ENCODE measurements at regions of chr4 and their contacts with region 1.

Region 1: GRCh38 chr4:3822230-3822947 is 56.2 kb downstream of the ADRA2C start:
- DNase-seq: peak; percentile 15
- ATAC-seq: no peak
- H3K4me3 ChIP-seq: no peak overlapping the region
- H3K27ac ChIP-seq: no peak overlapping the region
- H3K4me1 ChIP-seq: peaks cover 96% of the 10 kb centered on the region
- H3K27me3 ChIP-seq: no peaks in the 10 kb centered on the region
- CTCF ChIP-seq: no peak
- EP300 ChIP-seq: no peak
- POLR2A ChIP-seq: no peak
- RAD21 ChIP-seq: no peak

Region 2: DNA sequence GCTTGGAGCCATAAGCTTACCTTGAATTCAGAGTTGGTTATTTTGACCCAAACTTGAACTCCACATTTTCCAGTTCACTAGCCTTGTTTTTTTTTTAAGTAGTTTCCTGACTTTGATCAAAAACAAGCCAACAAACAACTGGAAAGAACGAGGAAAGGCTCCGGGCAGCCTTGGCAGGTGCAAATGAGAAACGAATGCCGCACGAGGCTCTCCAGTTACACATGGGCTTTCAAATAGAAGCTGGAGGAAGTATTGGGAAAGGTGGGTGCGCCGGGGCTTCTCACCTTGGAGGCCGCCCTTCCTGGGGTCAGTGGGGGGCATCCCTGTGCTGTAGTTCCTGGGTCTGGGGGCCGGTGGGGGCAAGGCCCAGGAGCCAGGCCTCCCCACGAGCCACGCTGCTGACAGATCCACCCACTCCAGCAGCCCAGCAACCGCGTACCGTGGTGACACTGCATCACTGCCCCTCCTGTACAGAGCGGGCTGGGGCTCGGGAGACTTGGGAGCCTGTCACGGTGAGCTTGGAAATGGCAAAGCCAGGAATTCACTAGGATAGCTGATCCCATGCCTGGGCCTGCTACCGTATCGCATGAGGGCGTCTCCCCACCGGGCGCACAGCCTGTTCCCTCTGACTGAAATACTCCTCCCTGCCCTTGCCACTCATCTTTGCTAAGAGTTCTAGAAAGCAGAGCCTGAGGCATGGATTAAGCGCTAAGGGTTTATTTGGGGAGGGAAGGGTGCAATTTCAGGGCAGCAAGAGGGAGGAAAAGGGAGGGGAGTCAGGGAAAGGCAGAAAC is 107.1 kb before region 1 on chr4:
- CTCF ChIA-PET with region 1: no interaction called
- POLR2A ChIA-PET with region 1: no interaction called
- in situ Hi-C with region 1: no loop called
- intact Hi-C with region 1: no loop called
- DNase-seq: no peak
- ATAC-seq: no peak
- H3K4me3 ChIP-seq: no peak overlapping the region
- H3K27ac ChIP-seq: no peak overlapping the region
- H3K4me1 ChIP-seq: peaks cover 6% of the 10 kb centered on the region; the same call in 1 of the 2 replicates
- H3K27me3 ChIP-seq: peaks cover 8 to 69% of the 10 kb centered on the region in 2 experiments; a peak in 4 of 5 replicates
- CTCF ChIP-seq: no peak
- EP300 ChIP-seq: no peak
- POLR2A ChIP-seq: no peak
- RAD21 ChIP-seq: no peak

Region 3: DNA sequence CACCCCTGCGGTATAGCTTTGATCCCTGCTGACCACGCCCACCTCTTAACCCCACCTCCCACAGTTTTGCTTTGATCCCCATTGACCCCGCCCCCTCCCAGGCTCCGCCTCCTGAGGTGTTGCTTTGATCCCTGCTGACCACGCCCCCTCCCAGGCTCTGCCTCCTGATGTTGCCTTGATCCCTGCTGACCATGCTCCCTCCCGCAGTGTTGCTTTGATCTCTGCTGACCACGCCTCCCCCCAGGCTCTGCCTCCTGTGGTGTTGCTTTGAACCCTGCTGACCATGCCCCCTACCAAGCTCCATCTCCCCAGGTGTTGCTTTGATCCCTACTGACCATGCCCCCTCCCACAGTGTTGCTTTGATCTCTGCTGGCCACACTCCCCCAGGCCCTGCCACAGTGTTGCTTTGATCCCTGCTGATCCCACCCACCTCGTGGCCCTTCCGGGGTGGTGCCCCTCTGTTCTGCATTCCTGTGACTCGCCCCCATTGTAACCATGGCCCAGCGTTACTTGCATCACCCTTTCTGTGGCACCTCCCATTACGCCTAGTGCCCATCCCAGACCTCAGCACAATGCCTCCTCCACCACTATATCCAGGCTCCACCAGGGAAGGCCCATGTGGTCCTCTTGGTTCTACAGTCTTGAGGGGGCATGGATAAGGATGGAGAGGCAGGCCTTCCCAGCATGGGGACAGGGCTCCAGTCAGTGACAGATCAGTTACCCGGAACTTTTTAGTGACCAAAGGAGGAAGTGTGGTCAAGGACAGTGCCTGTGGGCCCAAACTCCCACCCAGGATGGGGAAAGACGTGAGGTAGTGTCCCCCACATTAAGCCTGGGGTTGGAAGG is 14.6 kb after region 1 on chr4:
- CTCF ChIA-PET with region 1: no interaction called
- POLR2A ChIA-PET with region 1: interaction called, 67 read pairs
- in situ Hi-C with region 1: no loop called
- intact Hi-C with region 1: loop called (anchors 2 kb)
- DNase-seq: peak; percentile 99
- ATAC-seq: peak; percentile 89
- H3K4me3 ChIP-seq: no peak overlapping the region
- H3K27ac ChIP-seq: peak overlapping the region; percentile 95
- H3K4me1 ChIP-seq: peaks cover 79% of the 10 kb centered on the region
- H3K27me3 ChIP-seq: no peaks in the 10 kb centered on the region
- CTCF ChIP-seq: peak; percentile 56
- EP300 ChIP-seq: peak; percentile 97 to 98; a peak in 3 of 4 replicates
- POLR2A ChIP-seq: no peak
- RAD21 ChIP-seq: 0 out of 2 replicates have a peak, but pooled peaks have one; percentile 49